ENCODE measurements at regions of chr13 and their contacts with region 1.

Region 1: DNA sequence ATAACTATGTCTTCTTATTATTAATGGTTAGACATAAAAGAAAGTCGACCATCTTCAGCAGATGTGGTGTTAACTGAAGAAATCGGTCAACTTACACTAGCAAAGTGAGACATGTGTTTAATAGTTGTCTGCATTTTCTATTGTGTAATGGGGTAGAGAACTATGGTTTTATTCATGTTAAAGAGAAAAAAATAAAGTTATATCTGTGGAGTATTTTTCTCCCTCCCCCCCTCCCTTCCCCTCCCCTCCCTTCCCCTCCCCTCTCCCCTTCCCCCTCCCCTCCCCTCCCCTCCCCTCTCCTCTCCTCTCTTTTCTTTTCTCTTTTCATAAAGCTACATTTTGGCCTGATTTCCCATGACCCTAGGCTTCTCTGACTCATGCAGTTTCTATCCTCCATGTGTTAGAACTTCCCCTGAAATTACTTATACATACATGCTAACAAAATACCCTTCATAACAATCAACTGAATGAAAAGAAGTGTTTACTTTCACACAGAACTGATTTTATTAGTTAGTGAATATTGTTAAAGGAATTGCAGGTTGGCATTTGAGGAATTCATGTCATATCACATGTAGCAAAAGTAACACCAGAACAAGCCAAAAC is 1431.0 kb upstream of the ATXN8OS start:
- DNase-seq: no peak
- H3K4me3 ChIP-seq: no peak overlapping the region
- H3K27ac ChIP-seq: no peak overlapping the region
- H3K4me1 ChIP-seq: no peaks in the 10 kb centered on the region
- H3K27me3 ChIP-seq: no peaks in the 10 kb centered on the region
- CTCF ChIP-seq: no peak

Region 2: GRCh38 chr13:68727165-68727564 is 50.6 kb after region 1 on chr13:
- CTCF ChIA-PET with region 1: interaction called, 10 read pairs
- POLR2A ChIA-PET with region 1: no interaction called
- intact Hi-C with region 1: no loop called
- DNase-seq: no peak
- H3K4me3 ChIP-seq: no peak overlapping the region
- H3K27ac ChIP-seq: no peak overlapping the region
- H3K4me1 ChIP-seq: no peaks in the 10 kb centered on the region
- H3K27me3 ChIP-seq: no peaks in the 10 kb centered on the region
- CTCF ChIP-seq: no peak